Transverse colon (tissue), 4 donors: ENCODE measurements at regions of chr14 and their contacts with region 1.

Region 1: DNA sequence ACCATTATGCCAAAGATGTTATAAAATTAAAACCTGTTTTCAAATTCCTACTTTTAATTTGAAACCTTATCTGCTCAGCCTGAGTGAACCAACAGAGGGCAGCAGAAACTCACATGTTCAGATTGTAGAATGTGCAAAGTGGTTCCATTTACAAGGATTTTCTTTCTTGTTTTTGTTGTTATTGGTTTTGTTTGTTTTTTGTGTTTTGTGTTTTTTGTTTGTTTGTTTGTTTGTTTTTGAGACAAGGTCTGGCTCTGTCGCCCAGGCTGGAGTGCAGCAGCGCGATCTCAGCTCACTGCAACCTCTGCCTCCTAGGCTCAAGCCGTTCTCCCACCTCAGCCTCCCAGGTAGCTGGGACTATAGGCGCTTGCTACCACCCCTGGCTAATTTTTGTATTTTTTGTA is 22.8 kb upstream of the GARIN2 start:
- DNase-seq: peak; percentile 32
- H3K4me3 ChIP-seq: no peak overlapping the region
- H3K27ac ChIP-seq: no peak overlapping the region
- H3K4me1 ChIP-seq: peaks cover 0 to 8% (median 0%) of the 10 kb centered on the region in 4 donors
- H3K27me3 ChIP-seq: no peaks in the 10 kb centered on the region
- CTCF ChIP-seq: peak; percentile 77 to 82 (median 80)
- EP300 ChIP-seq: no peak
- POLR2A ChIP-seq: no peak

Region 2: GRCh38 chr14:67280506-67280905 is 114.1 kb after region 1 on chr14:
- in situ Hi-C with region 1: loop called in 3 of 4 experiments (anchors 5 to 10 kb)
- intact Hi-C with region 1: loop called (anchors 5 kb)
- DNase-seq: no peak
- H3K4me3 ChIP-seq: no peak overlapping the region
- H3K27ac ChIP-seq: no peak overlapping the region
- H3K4me1 ChIP-seq: peaks cover 0 to 34% (median 11%) of the 10 kb centered on the region in 4 donors
- H3K27me3 ChIP-seq: no peaks in the 10 kb centered on the region
- CTCF ChIP-seq: no peak
- EP300 ChIP-seq: no peak
- POLR2A ChIP-seq: no peak

Region 3: DNA sequence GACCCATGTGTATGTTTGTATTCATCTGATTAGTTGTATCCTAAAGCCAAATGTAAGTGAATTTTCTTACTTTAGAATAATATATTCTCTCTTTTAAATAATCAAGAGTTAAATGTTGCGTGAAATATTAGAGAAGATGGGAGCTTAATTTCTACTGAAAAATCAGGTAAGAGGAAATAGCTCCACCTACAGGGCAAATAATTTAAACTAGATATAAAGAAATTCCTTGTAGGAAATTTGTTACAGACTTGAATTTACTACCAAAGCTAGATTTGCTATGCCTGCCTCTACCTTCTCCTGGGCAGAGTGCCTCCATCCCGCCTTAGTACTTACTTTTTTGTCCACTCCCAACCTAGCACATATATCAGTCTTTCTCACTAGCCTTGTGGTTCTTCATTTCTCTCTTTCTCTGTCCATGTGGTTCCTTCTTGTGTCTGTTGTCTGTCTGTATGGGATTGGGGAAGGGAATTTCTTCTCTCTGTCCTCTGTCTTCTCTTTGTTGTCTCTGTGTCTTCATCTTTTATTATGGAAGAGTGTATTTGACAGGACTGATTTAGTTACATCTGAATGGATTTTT is 119.5 kb after region 1 on chr14:
- in situ Hi-C with region 1: loop called (anchors 5 to 10 kb)
- intact Hi-C with region 1: loop called (anchors 5 kb)
- DNase-seq: no peak
- H3K4me3 ChIP-seq: no peak overlapping the region
- H3K27ac ChIP-seq: no peak overlapping the region
- H3K4me1 ChIP-seq: peaks cover 0 to 10% (median 2%) of the 10 kb centered on the region in 4 donors
- H3K27me3 ChIP-seq: no peaks in the 10 kb centered on the region
- CTCF ChIP-seq: peak; percentile 54 to 64 (median 60)
- EP300 ChIP-seq: no peak
- POLR2A ChIP-seq: no peak